Activated CD4-positive, alpha-beta memory T cell treated with anti-CD3 and anti-CD28 coated beads, Interleukin-2, amount 10 ng/mL, durations not matched to agents 7 days and 5 days (primary cell): ENCODE measurements at regions of chr6 and their contacts with region 1.

Region 1: DNA sequence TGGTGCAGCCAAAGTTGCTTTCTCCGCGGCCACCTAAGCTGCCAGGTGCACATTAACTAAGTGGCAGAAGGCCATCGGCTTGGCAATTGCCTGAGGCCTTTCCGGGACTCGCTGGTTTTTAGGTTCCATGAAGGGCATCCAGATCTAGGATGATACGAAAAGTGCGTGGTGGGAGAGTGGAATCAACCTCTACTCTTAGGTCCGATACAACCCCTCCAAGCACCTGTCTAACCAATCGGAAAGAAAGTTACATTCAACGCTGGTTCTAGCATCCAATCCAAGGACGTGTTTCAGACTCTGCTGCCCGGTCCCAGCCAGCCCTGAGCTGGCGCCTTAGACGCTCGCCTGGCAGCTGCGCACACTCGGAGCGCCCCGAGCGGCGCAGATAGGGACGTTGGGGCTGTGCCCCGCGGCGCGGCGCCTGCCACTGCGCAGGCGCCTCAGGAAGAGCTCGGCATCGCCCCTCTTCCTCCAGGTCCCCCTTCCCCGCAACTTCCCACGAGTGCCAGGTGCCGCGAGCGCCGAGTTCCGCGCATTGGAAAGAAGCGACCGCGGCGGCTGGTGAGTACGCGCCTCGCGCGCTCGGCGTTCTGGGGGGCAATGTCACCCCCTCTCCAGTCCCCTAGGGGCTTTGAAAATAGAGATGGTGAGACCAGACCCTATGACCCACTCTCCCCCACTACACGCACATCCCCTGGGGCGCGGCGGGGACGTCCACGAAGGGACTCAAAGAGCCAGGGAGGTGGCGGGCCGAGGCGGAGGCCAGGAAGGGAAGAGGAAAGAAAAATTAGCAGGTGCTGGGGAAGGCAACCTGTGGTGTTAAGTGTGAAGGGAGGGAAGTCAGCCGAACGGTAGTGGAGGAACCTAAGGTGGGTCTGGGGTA is at the start of gene ENPP4:
- DNase-seq: peak; percentile 91
- H3K4me3 Mint-ChIP-seq: peak within 1 kb of the TSS; percentile 88
- H3K27ac Mint-ChIP-seq: peak within 1 kb of the TSS; percentile 70
- H3K4me1 Mint-ChIP-seq: peaks cover 31% of the 10 kb centered on the region
- H3K27me3 Mint-ChIP-seq: no peaks in the 10 kb centered on the region
- total RNA-seq, gene ENPP4: 8.2 to 9.4 TPM

Region 2: GRCh38 chr6:46116289-46116688 is 13.6 kb before region 1 on chr6:
- CTCF ChIA-PET with region 1: interaction called, 9 read pairs
- POLR2A ChIA-PET with region 1: interaction called, 11 read pairs
- DNase-seq: no peak
- H3K4me3 Mint-ChIP-seq: no peak overlapping the region
- H3K27ac Mint-ChIP-seq: no peak overlapping the region
- H3K4me1 Mint-ChIP-seq: peaks cover 21% of the 10 kb centered on the region
- H3K27me3 Mint-ChIP-seq: no peaks in the 10 kb centered on the region

Region 3: DNA sequence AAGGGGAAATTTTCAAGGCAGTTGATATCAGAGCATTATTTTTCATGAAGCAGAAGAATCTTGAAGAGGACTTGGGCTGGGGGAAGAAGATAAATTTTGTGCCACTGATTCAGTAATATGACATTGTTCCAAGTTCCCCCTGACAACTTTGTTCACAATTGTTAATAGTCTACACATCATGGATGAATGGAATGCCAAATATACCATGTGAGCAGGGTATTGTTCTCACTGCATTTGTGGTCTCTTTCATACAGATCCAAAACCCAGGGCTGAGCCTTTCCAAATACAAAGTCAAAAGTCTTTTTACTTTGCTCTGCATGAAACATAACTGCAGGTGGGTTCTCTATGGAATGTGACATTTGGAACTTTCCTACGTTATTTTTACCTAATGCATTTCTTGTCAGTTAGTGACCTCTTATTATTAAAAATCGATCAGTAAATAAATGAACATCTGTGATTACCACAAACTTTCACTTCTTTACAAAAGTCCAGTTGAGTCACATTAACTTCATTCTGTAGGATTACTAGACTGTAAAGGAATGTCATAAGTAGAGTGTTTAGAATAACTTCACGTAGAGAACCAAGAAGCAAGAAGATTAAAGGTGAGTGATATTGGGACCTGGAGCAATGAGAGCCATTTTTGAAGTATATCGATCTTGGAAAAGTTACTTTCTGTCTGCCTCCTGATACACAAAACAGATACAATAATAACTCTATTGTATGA is 260.4 kb after region 1 on chr6:
- CTCF ChIA-PET with region 1: no interaction called
- POLR2A ChIA-PET with region 1: no interaction called
- DNase-seq: no peak
- H3K4me3 Mint-ChIP-seq: no peak overlapping the region
- H3K27ac Mint-ChIP-seq: no peak overlapping the region
- H3K4me1 Mint-ChIP-seq: no peaks in the 10 kb centered on the region
- H3K27me3 Mint-ChIP-seq: peaks cover 22% of the 10 kb centered on the region